Naive thymus-derived CD4-positive, alpha-beta T cell (primary cell): ENCODE measurements at regions of chr7 and their contacts with region 1.

Region 1: GRCh38 chr7:40232242-40232893 is 97.6 kb downstream of the SUGCT start:
- DNase-seq: peak in 3 of 9 donors; percentile 3 to 12 (median 11)
- ATAC-seq: peak; percentile 40
- H3K4me3 ChIP-seq: no peak overlapping the region
- H3K4me3 Mint-ChIP-seq: no peak overlapping the region
- H3K27ac ChIP-seq: no peak overlapping the region
- H3K27ac Mint-ChIP-seq: peak overlapping the region in 1 of 9 donors; percentile 7
- H3K4me1 ChIP-seq: peaks cover 0 to 4% of the 10 kb centered on the region in 2 donors
- H3K4me1 Mint-ChIP-seq: peaks cover 0 to 19% (median 6%) of the 10 kb centered on the region in 7 donors
- H3K27me3 ChIP-seq: no peaks in the 10 kb centered on the region
- H3K27me3 Mint-ChIP-seq: no peaks in the 10 kb centered on the region

Region 2: DNA sequence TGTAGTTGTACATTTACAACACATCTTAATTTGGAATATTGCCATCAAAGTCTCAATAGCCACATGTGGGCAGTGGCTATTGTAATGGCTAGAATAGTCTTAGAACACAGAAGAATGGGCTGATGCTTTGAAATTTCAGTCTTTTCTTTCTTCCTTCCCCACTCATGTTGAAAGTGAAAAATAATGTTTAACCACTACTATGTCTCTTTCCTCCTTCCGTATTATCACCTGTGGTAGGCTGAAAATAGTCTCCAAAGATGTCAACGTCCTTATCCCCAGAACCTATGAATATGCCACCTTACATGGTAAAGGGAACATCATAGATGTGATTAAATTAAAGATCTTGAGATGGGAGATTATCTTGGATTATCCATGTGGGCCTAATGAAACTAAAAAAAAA is 56.5 kb after region 1 on chr7:
- CTCF ChIA-PET with region 1: no interaction called
- POLR2A ChIA-PET with region 1: no interaction called
- intact Hi-C with region 1: no loop called
- DNase-seq: no peak
- ATAC-seq: no peak
- H3K4me3 ChIP-seq: no peak overlapping the region
- H3K4me3 Mint-ChIP-seq: no peak overlapping the region
- H3K27ac ChIP-seq: no peak overlapping the region
- H3K27ac Mint-ChIP-seq: no peak overlapping the region
- H3K4me1 ChIP-seq: no peaks in the 10 kb centered on the region
- H3K4me1 Mint-ChIP-seq: no peaks in the 10 kb centered on the region
- H3K27me3 ChIP-seq: no peaks in the 10 kb centered on the region
- H3K27me3 Mint-ChIP-seq: peaks cover 0 to 3% (median 0%) of the 10 kb centered on the region in 5 donors

Region 3: GRCh38 chr7:41696314-41696916 is 1464.0 kb after region 1 on chr7:
- CTCF ChIA-PET with region 1: interaction called, 4 read pairs
- POLR2A ChIA-PET with region 1: no interaction called
- intact Hi-C with region 1: loop called in 1 of 2 experiments (anchors 2 kb)
- DNase-seq: peak in 1 of 9 donors; percentile 32
- ATAC-seq: no peak
- H3K4me3 ChIP-seq: no peak overlapping the region
- H3K4me3 Mint-ChIP-seq: no peak overlapping the region
- H3K27ac ChIP-seq: no peak overlapping the region
- H3K27ac Mint-ChIP-seq: no peak overlapping the region
- H3K4me1 ChIP-seq: no peaks in the 10 kb centered on the region
- H3K4me1 Mint-ChIP-seq: peaks cover 0 to 9% (median 6%) of the 10 kb centered on the region in 7 donors
- H3K27me3 ChIP-seq: no peaks in the 10 kb centered on the region
- H3K27me3 Mint-ChIP-seq: peaks cover 50 to 72% (median 60%) of the 10 kb centered on the region in 5 donors